ENCODE measurements at regions of chr11 and their contacts with region 1.

Region 1: GRCh38 chr11:59615637-59616395 is at the start of gene OSBP:
- DNase-seq: peak; percentile 98 to 100 (median 100)

Region 2: GRCh38 chr11:59550368-59550841 is 65.4 kb before region 1 on chr11:
- intact Hi-C with region 1: loop called (anchors 5 kb)
- DNase-seq: peak; percentile 58 to 94 (median 82)

Region 3: GRCh38 chr11:59560702-59561469 is 54.9 kb before region 1 on chr11:
- intact Hi-C with region 1: loop called (anchors 5 kb)
- DNase-seq: peak; percentile 56 to 92 (median 81)

Region 4: DNA sequence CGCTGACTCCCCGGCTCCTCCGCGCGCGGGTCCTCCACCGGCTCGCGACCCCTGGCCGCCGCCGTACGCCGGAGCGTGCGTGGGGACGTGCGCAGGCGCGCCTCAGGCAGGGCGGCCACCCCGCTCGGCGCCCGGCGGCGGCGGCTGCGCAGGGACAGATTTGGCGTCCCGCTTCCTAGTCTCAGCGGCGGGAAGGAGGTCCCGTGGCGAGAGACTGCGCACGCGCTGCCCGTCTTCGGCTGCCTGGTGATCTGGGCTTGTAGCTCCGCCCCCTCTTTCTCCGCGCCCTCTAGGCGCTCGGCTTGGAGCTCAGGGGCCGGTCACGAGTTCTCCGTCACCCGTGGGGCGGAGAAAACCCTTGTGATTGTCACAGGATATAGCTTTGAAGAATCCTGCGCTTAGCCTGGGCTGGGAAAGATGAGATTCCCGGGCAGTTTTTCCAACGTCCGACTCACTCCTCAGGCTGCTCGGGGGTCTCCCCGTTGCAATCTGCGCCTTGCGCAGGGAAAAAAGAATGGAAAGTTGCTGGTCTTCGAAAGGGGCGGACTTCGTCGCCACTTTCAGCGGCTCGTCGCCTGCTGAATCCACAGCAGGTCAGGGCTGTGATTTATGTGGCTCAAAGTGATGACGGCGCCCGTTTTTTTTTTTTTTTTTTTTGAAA is 53.3 kb after region 1 on chr11 and contains the start of gene PATL1:
- intact Hi-C with region 1: loop called (anchors 2 kb)
- DNase-seq: peak; percentile 96 to 100 (median 99)

Region 5: DNA sequence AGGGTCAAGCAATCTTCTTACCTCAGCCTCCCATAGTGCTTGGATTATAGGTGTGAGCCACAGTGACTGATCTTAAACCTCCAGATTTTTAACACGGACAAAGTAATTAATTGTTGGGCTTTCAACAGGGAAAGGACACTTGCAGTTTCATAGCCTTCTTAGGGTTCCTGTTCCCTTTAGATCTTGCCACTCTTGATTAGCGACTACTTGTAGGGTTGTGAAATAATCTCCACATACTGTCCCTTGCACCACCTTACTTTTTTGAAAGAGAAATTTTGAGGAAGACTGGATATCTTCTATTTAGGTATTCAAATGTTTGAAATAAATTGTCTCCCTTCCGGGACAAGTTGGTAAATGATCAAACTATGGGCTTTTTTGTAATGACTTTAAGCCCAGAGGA is 619.5 kb after region 1 on chr11:
- intact Hi-C with region 1: no loop called
- DNase-seq: no peak

Region 6: DNA sequence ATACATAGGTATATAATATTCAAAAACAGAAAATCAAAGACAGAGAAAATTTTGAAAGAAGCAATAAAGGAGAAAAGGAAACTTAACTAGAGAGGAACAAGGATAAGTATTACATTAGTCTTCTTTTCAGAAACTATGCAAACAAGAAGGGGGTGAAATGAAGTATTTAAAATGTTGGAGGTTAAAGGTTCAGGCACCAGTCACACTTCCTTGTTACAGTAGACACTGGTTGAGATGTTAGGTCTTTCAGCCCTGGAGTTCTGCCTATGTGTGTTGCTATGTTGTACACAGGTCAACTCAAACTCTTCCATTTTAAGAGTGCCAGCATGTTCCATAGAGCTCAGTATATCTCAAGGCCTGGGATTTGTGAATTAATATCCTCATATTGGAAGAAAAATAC is 658.6 kb after region 1 on chr11:
- intact Hi-C with region 1: no loop called
- DNase-seq: no peak